WTC11 (cell line): ENCODE measurements at regions of chr1 and their contacts with region 1.

Region 1: GRCh38 chr1:19661721-19662228 is 2.9 kb upstream of the HTR6 start:
- DNase-seq: no peak
- ATAC-seq: no peak
- H3K4me3 Mint-ChIP-seq: no peak overlapping the region
- H3K27ac Mint-ChIP-seq: no peak overlapping the region
- H3K4me1 Mint-ChIP-seq: peaks cover 14% of the 10 kb centered on the region
- H3K27me3 Mint-ChIP-seq: peaks cover 38% of the 10 kb centered on the region
- CTCF ChIP-seq: peak; percentile 66

Region 2: DNA sequence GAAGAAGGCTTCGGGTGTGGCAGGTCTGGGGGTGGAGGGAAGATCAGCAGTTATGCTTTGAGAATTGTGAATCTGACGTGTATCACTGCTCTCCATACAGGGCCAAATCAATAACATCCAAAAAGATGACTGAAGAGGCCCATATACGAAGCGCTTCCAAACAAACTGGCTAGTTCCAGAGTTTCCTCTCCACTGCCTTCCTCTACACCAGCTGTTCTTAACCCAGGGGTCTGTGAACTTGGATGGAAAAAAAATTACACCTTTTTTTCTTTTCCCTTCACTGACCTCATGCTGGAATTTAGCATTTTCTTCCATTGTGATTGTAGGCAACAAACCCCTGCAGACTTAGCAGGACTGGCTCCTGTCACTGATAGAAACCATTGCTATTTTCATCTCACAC is 94.7 kb before region 1 on chr1:
- CTCF ChIA-PET with region 1: no interaction called
- POLR2A ChIA-PET with region 1: no interaction called
- DNase-seq: no peak
- ATAC-seq: no peak
- H3K4me3 Mint-ChIP-seq: no peak overlapping the region
- H3K27ac Mint-ChIP-seq: no peak overlapping the region
- H3K4me1 Mint-ChIP-seq: no peaks in the 10 kb centered on the region
- H3K27me3 Mint-ChIP-seq: peaks cover 9% of the 10 kb centered on the region
- CTCF ChIP-seq: no peak

Region 3: DNA sequence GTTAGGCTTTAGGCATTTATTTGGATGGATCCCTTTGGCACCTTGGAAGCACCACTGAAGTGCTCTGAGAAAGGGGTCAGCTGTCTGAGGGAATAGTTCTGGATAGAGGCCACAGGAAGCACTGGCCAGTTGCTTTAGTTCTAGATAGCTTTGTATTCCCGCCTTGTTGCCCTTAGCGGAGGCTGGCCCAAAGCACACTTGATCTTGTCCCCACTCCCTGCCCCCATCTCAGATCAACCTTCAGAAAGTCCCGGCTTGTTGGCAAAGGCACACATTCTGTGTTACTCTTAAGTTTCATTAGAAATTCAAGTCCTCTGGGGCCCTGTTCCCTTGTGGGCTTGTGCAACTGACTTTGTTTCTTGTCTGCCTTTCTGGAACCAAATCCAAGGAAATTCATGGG is 32.9 kb before region 1 on chr1:
- CTCF ChIA-PET with region 1: interaction called, 13 read pairs
- POLR2A ChIA-PET with region 1: no interaction called
- DNase-seq: no peak
- ATAC-seq: no peak; the same call in 1 of the 2 replicates
- H3K4me3 Mint-ChIP-seq: no peak overlapping the region
- H3K27ac Mint-ChIP-seq: 0 out of 2 replicates have a peak overlapping the region, but pooled peaks have one; percentile 81
- H3K4me1 Mint-ChIP-seq: peaks cover 18% of the 10 kb centered on the region
- H3K27me3 Mint-ChIP-seq: no peaks in the 10 kb centered on the region
- CTCF ChIP-seq: no peak

Region 4: DNA sequence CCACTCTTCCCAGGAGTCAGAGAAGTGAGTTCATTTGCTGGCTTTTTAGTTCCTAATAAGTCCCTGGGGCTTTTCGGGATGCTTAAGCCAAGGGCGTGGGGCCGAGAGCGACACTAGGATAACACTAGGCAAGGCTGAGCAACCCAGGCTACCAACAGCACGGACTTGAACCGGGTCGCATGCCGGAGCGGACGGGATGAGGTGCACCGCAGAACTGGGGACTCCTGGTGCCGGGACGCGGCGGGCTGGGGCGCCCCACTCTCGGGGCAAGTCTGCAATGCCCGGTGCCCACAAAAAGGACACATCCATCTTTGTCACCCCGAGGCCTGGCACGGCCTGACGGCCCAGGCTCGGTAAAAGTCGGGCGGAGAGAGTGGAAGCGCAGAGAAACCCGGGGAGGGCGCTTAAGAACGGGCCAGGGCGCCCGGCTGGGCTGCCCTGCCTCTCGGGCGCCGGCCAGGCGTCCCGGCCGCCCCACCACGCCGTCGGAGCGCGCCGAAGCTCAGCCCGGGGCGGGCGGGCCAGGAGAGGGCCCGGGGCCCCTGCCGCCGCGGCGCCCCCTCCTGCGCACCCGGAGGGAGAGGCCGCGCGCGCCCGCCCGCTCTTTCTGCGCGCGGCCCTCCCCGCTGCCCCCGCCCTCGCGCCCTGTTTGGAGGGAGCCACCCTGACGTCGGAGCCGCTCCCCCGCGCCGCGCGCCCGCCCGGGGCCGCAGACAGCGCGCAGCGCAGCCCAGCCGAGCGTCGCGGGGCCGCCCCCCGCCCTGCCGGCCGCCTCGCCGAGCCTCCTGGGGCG is 18.0 kb before region 1 on chr1 and contains the start of gene NBL1:
- CTCF ChIA-PET with region 1: interaction called, 11 read pairs
- POLR2A ChIA-PET with region 1: interaction called, 8 read pairs
- DNase-seq: no peak
- ATAC-seq: peak; percentile 12
- H3K4me3 Mint-ChIP-seq: peak within 1 kb of the TSS; percentile 94
- H3K27ac Mint-ChIP-seq: no peak within 1 kb of the TSS
- H3K4me1 Mint-ChIP-seq: peaks cover 25% of the 10 kb centered on the region
- H3K27me3 Mint-ChIP-seq: peaks cover 56% of the 10 kb centered on the region
- CTCF ChIP-seq: no peak
- total RNA-seq, gene NBL1: 8.8 to 17.1 TPM (median 10.2 TPM) in 3 replicates

Region 5: DNA sequence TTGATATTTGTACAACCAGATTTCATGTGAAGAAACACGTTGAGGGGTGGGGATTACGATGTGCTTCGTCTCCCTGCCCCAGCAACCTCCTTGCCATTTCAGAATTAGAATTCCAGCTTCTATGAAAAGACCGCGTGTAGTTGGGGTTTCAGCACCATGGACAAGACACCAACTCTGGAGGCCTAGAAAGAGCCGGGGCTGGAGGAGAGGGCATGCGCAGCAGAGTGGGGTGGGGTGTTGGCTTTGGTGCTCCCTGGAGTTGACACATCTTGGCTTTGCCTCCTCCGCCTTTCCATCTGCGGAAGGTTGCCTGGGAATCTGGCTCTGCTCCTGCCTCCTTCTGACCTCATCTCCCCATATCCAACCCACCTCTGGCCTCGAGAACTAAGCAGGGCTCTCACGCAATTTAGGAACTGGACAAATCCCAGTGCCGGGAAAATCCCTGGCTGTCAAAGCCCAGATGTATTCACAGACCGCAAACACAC is 14.7 kb after region 1 on chr1:
- CTCF ChIA-PET with region 1: interaction called, 37 read pairs
- POLR2A ChIA-PET with region 1: no interaction called
- DNase-seq: peak; percentile 81
- ATAC-seq: peak; percentile 93
- H3K4me3 Mint-ChIP-seq: no peak overlapping the region
- H3K27ac Mint-ChIP-seq: no peak overlapping the region
- H3K4me1 Mint-ChIP-seq: no peaks in the 10 kb centered on the region
- H3K27me3 Mint-ChIP-seq: peaks cover 22% of the 10 kb centered on the region
- CTCF ChIP-seq: no peak

Region 6: GRCh38 chr1:19688041-19688842 is 26.5 kb after region 1 on chr1:
- CTCF ChIA-PET with region 1: interaction called, 19 read pairs
- POLR2A ChIA-PET with region 1: no interaction called
- DNase-seq: no peak
- ATAC-seq: no peak
- H3K4me3 Mint-ChIP-seq: no peak overlapping the region
- H3K27ac Mint-ChIP-seq: no peak overlapping the region
- H3K4me1 Mint-ChIP-seq: peaks cover 23% of the 10 kb centered on the region
- H3K27me3 Mint-ChIP-seq: no peaks in the 10 kb centered on the region
- CTCF ChIP-seq: no peak

Region 7: DNA sequence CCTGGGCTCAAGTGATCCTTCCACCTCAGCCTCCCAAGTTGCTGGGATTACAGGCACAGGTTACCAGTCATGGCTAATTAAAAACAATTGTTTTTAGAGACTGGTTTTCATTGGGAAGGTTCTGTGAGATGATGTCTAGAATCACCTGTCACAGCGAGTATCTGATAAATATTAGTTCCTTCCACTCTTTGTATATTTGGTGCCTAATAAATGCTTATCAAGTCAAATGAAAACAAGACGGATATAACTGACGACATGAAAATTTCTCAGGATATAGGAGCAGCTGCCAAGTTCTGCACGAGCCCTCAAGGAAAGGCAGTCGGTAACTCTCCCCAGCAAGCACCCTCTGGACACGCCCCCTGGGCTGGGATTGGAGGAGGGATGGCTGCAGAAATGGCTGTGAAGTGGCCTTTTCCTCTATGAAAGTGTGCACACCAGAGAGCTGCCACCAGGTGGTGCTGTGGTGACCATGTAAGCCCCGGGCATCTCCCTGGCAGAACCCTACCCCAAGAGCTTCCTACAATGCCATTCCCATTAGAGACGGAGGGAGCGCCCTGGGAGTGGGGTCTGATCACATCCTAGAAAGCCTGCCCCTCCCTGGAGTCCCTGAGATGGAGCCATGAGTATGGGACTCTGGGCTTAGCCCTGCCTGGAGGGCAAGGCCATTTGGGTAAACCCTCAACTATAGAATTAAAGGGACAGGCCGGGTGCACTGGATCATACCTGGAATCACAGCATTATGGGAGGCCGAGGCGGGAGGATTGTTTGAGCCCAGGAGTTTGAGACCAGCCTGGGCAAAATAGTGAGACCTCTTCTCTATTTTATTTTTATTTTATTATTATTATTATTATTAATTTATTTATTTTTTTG is 53.8 kb after region 1 on chr1:
- CTCF ChIA-PET with region 1: interaction called, 14 read pairs
- POLR2A ChIA-PET with region 1: no interaction called
- DNase-seq: peak; percentile 99
- ATAC-seq: peak; percentile 97
- H3K4me3 Mint-ChIP-seq: peak overlapping the region; percentile 15; the same call in 1 of the 2 replicates
- H3K27ac Mint-ChIP-seq: no peak overlapping the region; the same call in 1 of the 2 replicates
- H3K4me1 Mint-ChIP-seq: peaks cover 15% of the 10 kb centered on the region
- H3K27me3 Mint-ChIP-seq: no peaks in the 10 kb centered on the region; the same call in 1 of the 2 replicates
- CTCF ChIP-seq: peak; percentile 74

Region 8: DNA sequence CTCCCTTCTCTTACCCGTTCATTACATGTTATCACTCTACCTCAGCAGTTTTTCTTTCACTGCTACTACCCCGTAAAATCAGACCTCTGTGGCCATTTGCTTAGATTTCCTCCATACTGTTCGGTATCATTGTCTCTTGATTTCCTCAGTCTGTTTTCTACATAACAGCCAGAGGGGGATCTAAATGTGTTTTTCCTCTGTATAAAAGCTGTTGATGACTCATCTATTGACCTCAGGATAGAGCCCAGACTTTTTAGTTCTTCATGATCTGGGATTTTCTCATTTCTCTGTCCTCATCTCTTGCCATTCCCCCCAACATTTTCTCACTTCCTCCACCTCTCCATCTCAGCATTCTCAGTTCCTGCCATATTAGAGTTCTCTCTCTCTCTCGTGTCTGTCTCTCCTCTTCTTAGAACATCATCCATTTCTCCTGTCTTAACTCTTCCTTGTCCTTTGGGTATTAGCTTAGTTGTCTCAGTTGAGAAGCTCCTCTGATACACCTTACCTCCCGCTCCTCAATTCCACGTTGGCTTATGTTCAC is 230.9 kb after region 1 on chr1:
- CTCF ChIA-PET with region 1: no interaction called
- POLR2A ChIA-PET with region 1: interaction called, 13 read pairs
- DNase-seq: no peak
- ATAC-seq: no peak
- H3K4me3 Mint-ChIP-seq: no peak overlapping the region
- H3K27ac Mint-ChIP-seq: no peak overlapping the region
- H3K4me1 Mint-ChIP-seq: peaks cover 5% of the 10 kb centered on the region
- H3K27me3 Mint-ChIP-seq: no peaks in the 10 kb centered on the region
- CTCF ChIP-seq: no peak